Activated naive CD4-positive, alpha-beta T cell treated with anti-CD3 and anti-CD28 coated beads for 36 hours (primary cell): ENCODE measurements at regions of chr7 and their contacts with region 1.

Region 1: DNA sequence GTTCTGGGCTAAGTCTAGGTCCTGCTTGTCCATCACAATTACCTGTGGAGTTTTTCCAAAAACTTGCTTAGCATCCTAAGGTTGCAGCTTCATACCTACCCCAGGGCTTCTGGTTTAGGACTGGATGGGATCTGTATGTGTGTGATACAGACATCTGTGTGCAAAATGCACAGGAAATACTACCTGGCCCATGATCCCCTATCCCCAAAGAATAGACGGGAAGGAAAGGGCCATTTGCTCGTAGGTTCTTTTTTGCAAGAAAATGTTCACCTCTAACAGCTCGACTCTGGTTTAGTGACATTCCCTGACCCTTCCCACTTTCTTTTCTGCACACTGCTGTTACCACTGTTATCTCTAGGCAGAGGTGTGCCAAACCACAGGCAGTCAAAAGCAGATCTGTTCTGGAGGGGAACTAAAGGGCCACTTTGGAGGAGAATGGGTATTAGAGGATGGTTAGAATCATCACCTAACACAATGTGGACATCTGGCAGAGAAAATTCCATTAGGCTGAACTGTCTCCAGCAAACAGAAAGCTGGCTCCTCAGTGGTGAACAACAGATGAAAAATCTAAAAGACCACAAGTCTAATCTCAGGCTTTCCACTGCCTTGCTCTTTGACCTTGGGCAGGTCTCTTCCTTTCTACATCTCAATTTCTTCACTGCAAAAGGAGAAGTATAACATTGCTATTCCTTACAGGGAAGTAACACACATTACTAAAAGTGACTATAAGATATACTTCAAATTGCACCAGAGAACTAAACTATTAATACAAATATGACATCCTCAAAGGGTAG is 107.4 kb downstream of the UBE2H start:
- DNase-seq: no peak
- H3K4me3 Mint-ChIP-seq: no peak overlapping the region
- H3K27ac Mint-ChIP-seq: peak overlapping the region; percentile 22
- H3K4me1 Mint-ChIP-seq: peaks cover 50% of the 10 kb centered on the region
- H3K27me3 Mint-ChIP-seq: no peaks in the 10 kb centered on the region

Region 2: DNA sequence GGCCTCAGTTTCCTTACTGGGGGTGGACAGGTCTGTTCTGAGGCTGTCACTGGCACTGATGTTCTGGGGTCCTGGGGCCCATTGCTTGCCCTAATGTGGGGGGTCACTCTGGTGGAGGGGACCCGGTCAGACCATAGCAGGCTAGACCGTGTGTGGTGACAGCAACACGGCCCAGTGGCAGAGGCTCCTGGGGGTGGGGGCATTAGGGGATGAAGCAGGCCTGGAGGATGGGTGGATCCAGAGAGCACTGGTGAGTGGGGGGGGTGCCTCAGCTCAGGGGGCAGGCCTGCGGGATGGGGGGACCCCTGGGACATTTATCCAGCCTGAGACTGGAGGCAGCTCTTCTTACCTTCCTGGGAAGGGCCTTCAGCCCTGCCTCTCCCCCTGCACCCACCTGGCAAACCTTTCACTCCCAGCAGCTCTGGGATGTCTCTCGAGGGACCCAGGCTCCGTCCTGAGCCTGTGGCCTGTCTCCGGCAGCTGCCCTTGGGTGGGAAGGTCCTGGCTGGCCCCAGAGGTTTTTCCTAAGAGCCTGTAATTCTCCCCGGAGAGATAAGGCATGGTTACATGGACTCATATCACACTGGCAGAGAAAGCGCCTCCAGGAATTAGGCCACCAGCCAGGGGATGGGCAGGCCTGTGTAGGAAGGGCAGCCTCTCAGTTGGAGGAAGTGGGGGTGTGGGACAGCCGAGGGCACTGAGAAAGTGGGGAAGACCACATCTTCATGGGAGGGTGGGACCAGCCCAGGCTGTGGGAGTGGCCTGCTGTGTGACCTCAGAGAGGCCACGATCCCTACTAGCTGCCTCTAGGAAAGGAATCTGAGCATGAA is 40.3 kb before region 1 on chr7:
- CTCF ChIA-PET with region 1: no interaction called
- intact Hi-C with region 1: no loop called
- DNase-seq: no peak
- H3K4me3 Mint-ChIP-seq: no peak overlapping the region
- H3K27ac Mint-ChIP-seq: no peak overlapping the region
- H3K4me1 Mint-ChIP-seq: no peaks in the 10 kb centered on the region
- H3K27me3 Mint-ChIP-seq: no peaks in the 10 kb centered on the region

Region 3: GRCh38 chr7:129875745-129876411 is 30.5 kb after region 1 on chr7:
- CTCF ChIA-PET with region 1: interaction called, 3 read pairs
- intact Hi-C with region 1: loop called (anchors 1 kb)
- DNase-seq: no peak
- H3K4me3 Mint-ChIP-seq: no peak overlapping the region
- H3K27ac Mint-ChIP-seq: no peak overlapping the region
- H3K4me1 Mint-ChIP-seq: peaks cover 48% of the 10 kb centered on the region
- H3K27me3 Mint-ChIP-seq: no peaks in the 10 kb centered on the region

Region 4: GRCh38 chr7:130205084-130205947 is 359.9 kb after region 1 on chr7 and contains the start of gene TMEM209:
- CTCF ChIA-PET with region 1: no interaction called
- intact Hi-C with region 1: no loop called
- DNase-seq: peak; percentile 97
- H3K4me3 Mint-ChIP-seq: peak within 1 kb of the TSS; percentile 98
- H3K27ac Mint-ChIP-seq: peak within 1 kb of the TSS; percentile 98
- H3K4me1 Mint-ChIP-seq: peaks cover 33% of the 10 kb centered on the region
- H3K27me3 Mint-ChIP-seq: no peaks in the 10 kb centered on the region
- total RNA-seq, gene TMEM209: 36.0 to 37.3 TPM